ENCODE measurements at regions of chr16 and their contacts with region 1.

Region 1: DNA sequence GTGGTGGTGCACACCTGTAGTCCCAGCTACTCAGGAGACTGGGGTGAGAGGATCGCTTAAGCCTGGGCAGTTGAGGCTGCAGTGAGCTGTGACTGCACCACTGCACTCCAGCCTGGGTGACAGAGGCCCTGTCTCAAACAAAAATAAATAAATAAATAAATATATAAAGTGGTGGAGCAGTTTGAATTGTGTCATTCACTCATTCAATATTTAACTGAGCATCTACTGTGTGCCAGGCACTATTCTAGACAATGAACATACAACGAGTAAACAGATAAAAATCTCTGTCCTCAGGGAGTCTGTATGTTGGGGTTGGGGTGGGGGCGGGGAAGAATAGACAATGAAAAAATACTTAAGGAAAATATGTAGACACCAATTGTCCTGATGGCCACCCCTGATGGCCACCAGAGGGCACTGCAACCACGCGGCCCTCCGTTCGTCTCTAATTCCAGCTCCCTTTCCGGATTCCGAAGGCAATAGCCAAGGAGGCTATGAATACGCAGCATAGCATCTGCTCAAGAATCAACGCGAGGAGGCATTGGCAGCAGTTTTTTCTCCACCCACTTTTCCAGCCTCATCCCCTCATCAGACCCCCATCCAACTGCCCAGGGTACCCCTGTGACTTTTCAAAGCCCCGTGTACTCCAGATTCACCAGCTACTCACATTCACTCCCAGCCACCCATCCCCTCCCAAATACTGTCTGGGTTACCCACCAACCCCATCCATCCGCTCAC is 21.4 kb downstream of the QPRT start:
- DNase-seq: peak; percentile 85 to 90 (median 87)
- H3K4me3 ChIP-seq: peak overlapping the region in 1 of 7 experiments; percentile 7
- H3K27ac ChIP-seq: no peak overlapping the region
- H3K4me1 ChIP-seq: peaks cover 0 to 21% (median 14%) of the 10 kb centered on the region in 4 experiments
- H3K27me3 ChIP-seq: peaks cover 0 to 9% (median 0%) of the 10 kb centered on the region in 5 experiments

Region 2: GRCh38 chr16:29686740-29687332 is 13.6 kb before region 1 on chr16:
- CTCF ChIA-PET with region 1: interaction called, 21 read pairs
- POLR2A ChIA-PET with region 1: no interaction called
- DNase-seq: peak; percentile 38 to 78 (median 72)
- H3K4me3 ChIP-seq: peak overlapping the region in 1 of 7 experiments; percentile 4
- H3K27ac ChIP-seq: peak overlapping the region in 1 of 2 experiments; percentile 56
- H3K4me1 ChIP-seq: peaks cover 10 to 38% (median 19%) of the 10 kb centered on the region in 4 experiments
- H3K27me3 ChIP-seq: no peaks in the 10 kb centered on the region

Region 3: DNA sequence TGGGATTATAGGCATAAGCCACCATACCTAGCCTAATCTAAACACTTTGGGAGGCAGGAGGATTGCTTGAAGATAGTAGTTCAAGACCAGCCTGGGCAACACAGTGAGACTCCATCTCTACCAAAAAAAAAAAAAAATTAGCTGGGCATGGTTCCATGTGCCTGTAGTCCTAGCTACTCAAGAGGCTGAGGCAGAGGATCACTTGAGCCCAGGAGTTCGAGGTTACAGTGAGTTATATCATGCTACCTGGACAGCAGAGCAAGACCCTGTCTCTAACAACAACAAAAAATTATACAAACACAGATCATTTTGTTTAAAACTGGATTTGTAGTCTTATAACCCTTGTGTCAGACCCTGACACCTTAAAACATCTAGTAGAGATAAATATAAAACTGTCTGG is 53.1 kb after region 1 on chr16:
- CTCF ChIA-PET with region 1: interaction called, 11 read pairs
- POLR2A ChIA-PET with region 1: no interaction called
- DNase-seq: no peak
- H3K4me3 ChIP-seq: no peak overlapping the region
- H3K27ac ChIP-seq: no peak overlapping the region
- H3K4me1 ChIP-seq: no peaks in the 10 kb centered on the region
- H3K27me3 ChIP-seq: no peaks in the 10 kb centered on the region

Region 4: DNA sequence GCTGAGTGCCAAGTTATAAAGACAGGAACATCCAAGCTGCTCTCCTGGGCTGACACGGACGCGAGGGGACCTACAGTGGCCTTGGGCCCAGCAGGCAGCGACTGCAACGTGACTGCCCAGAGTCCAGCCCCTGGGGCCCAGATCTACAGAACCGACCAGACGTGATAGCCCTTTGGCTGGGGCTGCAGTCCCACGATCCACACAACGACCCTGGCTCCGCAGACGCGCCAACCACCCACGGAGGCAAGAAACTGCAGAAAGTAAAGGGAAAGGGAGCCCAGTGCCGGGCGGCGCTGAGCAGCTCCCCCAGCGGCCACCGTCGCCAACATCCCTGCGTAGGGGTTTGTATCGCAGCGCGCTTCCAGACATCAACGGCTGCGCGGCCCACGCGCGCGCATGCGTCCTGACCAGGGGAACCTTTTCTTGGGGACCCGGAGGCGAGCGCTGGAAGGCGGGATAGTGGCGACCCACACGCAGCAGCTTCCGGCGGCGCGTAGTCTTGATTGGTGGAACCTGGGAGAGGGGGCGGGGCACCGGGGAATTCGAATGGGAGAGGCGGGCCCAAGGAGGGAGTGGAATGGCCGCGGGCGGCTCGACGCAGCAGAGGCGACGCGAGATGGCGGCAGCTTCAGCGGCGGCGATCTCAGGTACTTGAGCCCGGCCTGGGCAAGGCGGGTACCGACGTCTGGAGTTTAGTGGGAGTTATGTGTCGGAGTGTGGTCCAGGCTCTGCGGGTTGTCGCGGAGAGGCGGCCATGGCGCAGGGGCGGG is 89.9 kb after region 1 on chr16 and contains the start of gene KIF22:
- CTCF ChIA-PET with region 1: interaction called, 20 read pairs
- POLR2A ChIA-PET with region 1: no interaction called
- DNase-seq: peak; percentile 99 to 100 (median 99)
- H3K4me3 ChIP-seq: peak within 1 kb of the TSS; percentile 83 to 100 (median 97)
- H3K27ac ChIP-seq: peak within 1 kb of the TSS; percentile 72 to 86
- H3K4me1 ChIP-seq: peaks cover 12 to 34% (median 26%) of the 10 kb centered on the region in 4 experiments
- H3K27me3 ChIP-seq: no peaks in the 10 kb centered on the region

Region 5: DNA sequence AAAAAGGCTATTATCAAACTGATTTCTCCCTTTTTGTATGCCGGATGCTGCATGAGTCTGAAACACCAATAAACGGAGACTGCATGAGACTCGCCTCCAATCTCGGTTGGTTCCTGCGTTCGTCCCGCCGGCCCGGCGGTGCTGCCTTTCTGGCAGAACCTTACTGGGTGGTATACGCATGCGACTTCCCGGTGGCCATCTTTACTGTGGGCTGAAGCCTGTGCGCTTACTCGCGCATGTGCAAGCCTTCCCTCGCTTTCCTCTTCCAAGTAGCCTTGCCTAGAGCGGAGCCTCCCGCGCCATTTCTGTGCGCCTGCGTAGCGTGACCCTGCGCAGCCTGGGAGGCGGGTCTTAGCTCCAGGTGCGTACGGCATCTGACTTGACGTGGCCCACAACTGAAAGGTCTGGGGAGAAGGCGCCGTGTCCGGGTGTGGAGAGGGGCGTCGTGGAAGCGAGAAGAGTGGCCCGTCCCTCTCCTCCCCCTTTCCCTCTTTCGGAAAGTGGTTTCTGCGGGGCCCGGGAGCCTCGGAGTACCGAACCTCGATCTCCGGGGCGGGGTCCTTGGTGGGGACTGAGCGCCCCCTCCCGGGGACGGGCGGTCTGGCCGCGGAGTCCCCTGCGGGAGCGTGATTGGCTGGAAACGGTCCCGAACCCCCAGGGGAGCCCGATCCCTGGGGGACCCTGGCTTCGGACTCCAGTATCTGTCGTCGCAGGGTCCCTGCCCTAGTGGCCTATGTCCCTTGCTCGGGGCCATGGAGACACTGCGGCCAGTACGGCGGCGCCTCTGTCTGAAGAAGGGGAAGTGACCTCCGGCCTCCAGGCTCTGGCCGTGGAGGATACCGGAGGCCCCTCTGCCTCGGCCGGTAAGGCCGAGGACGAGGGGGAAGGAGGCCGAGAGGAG is 115.6 kb after region 1 on chr16 and contains the start of gene PAGR1:
- CTCF ChIA-PET with region 1: interaction called, 46 read pairs
- POLR2A ChIA-PET with region 1: no interaction called
- DNase-seq: peak; percentile 100
- H3K4me3 ChIP-seq: peak within 1 kb of the TSS; percentile 87 to 96 (median 90)
- H3K27ac ChIP-seq: peak within 1 kb of the TSS; percentile 33 to 75
- H3K4me1 ChIP-seq: peaks cover 7 to 70% (median 58%) of the 10 kb centered on the region in 4 experiments
- H3K27me3 ChIP-seq: peaks cover 0 to 20% (median 8%) of the 10 kb centered on the region in 5 experiments

Region 6: GRCh38 chr16:29876217-29876593 is 175.8 kb after region 1 on chr16:
- CTCF ChIA-PET with region 1: no interaction called
- POLR2A ChIA-PET with region 1: no interaction called
- DNase-seq: no peak
- H3K4me3 ChIP-seq: peak overlapping the region in 2 of 7 experiments; percentile 46 to 59
- H3K27ac ChIP-seq: no peak overlapping the region
- H3K4me1 ChIP-seq: peaks cover 0 to 12% (median 7%) of the 10 kb centered on the region in 4 experiments
- H3K27me3 ChIP-seq: peaks cover 0 to 37% (median 15%) of the 10 kb centered on the region in 5 experiments